ENCODE measurements at regions of chr14 and their contacts with region 1.

Region 1: GRCh38 chr14:22918804-22919600 is at the start of gene RBM23:
- DNase-seq: peak; percentile 94
- CTCF ChIP-seq: no peak

Region 2: DNA sequence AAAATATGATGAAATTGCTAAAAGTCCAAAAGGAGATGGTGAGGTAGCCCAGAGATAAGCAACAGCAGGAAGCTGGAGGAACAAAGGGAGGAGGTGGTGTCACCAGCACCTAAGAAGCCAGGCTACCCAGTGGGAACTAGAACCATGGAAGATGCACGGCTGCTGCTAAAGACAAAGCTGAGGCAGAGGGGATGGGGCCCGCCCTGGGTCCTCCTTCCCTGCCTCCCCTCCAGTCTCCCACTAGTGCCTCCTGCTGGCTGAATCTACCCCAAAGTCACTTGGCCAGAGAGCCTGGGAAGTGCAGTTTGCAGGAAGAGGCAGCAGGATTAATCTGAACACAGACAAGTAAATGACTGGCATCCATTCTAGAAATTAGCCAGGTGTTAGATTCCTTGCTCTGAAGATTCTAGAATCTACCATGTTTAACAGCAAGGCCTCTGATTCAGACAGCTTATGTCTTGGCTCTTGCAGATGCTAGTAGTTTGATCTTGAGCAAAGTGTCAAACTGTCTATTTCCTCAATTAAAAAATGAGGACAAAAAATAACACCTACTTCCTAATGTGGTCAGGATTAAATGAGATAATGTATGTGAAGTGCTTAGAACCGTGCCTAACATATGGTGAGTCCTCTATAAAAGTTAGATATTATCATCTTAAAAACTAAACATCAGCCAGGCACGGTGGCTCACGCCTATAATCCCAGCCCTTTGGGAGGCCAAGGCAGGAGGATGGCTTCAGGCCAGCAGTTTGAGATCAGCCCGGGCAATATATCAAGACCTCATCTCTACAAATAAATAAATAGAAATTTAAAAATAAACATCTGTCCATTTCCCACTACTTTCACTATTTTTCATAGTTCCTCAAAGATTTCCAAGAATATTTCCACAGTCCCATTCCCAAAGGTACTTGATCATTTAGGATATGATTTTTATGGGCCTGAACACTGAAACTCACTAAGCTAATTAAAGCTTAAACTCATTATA is 53.3 kb before region 1 on chr14:
- CTCF ChIA-PET with region 1: interaction called, 21 read pairs
- POLR2A ChIA-PET with region 1: interaction called, 10 read pairs
- DNase-seq: no peak
- CTCF ChIP-seq: no peak

Region 3: GRCh38 chr14:23020143-23021128 is 101.4 kb after region 1 on chr14:
- CTCF ChIA-PET with region 1: no interaction called
- POLR2A ChIA-PET with region 1: no interaction called
- DNase-seq: no peak
- CTCF ChIP-seq: no peak